ENCODE measurements at regions of chr20 and their contacts with region 1.

Region 1: GRCh38 chr20:16412906-16413305 is 160.3 kb downstream of the KIF16B start:
- DNase-seq: no peak
- ATAC-seq: no peak
- H3K4me3 ChIP-seq: no peak overlapping the region
- H3K27ac ChIP-seq: no peak overlapping the region
- H3K4me1 ChIP-seq: no peaks in the 10 kb centered on the region
- H3K27me3 ChIP-seq: no peaks in the 10 kb centered on the region
- CTCF ChIP-seq: no peak

Region 2: GRCh38 chr20:15930311-15931305 is 482.3 kb before region 1 on chr20:
- intact Hi-C with region 1: loop called in 1 of 10 experiments (anchors 5 kb)
- DNase-seq: no peak
- ATAC-seq: peak in 1 of 8 donors; percentile 46
- H3K4me3 ChIP-seq: no peak overlapping the region
- H3K27ac ChIP-seq: no peak overlapping the region
- H3K4me1 ChIP-seq: no peaks in the 10 kb centered on the region
- H3K27me3 ChIP-seq: no peaks in the 10 kb centered on the region
- CTCF ChIP-seq: peak in 7 of 9 donors; percentile 13 to 43 (median 24)